GM18951 (cell line): ENCODE measurements at regions of chr9 and their contacts with region 1.

Region 1: GRCh38 chr9:32579706-32580331 is 6.9 kb upstream of the NDUFB6 start:
- POLR2A ChIP-seq: no peak

Region 2: GRCh38 chr9:32300373-32300772 is 279.4 kb before region 1 on chr9:
- in situ Hi-C with region 1: no loop called
- POLR2A ChIP-seq: no peak

Region 3: DNA sequence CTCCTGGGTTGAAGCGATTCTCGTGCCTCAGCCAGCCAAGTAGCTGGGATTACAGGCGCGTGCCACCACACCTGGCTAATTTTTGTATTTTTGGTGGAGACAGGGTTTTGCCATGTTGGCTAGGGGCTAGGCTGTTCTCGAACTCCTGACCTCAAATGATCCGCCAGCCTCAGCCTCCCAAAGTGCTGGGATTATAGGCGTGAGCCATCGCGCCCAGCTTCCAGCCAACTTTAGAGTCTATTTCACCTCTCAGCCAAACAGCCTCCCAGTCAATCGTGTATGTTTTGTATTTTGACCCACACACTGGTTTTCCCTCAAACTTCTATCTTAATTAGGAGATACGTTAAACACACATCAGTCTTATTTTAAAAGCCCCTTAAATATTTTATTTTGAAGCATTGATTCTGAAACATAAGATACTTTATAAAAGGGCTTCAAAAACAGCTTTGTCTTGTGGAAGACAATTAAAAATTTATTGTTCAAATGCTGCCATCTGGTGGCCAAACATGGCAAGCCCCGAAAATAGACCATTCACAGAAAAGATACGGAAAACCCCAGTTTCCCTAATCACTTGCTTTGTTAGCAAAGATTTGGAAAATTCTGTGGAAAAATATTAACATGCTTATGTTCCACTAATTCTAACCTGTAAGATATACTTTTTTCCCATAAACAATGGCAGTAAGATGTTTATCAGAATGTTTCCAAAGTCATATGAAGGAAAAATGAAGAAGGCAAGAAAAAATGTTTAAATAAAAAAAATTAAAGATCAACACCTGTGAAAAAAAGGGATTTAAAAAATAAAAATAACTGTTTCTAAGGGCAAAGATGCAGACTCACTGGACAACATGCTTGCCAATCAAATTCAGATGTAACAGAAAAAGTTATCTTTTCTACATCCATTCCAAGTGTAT is 388.5 kb after region 1 on chr9:
- in situ Hi-C with region 1: loop called (anchors 5 kb)
- POLR2A ChIP-seq: no peak